PC-9 (cell line): ENCODE measurements at regions of chr7 and their contacts with region 1.

Region 1: GRCh38 chr7:32803406-32804141 is 88.0 kb downstream of the KBTBD2 start:
- DNase-seq: no peak
- H3K4me3 ChIP-seq: no peak overlapping the region
- H3K27ac ChIP-seq: no peak overlapping the region
- H3K4me1 ChIP-seq: no peaks in the 10 kb centered on the region
- H3K27me3 ChIP-seq: no peaks in the 10 kb centered on the region
- CTCF ChIP-seq: no peak

Region 2: GRCh38 chr7:32490127-32490822 is 313.3 kb before region 1 on chr7 and contains the start of gene LSM5:
- CTCF ChIA-PET with region 1: no interaction called
- POLR2A ChIA-PET with region 1: no interaction called
- intact Hi-C with region 1: loop called (anchors 5 kb)
- DNase-seq: peak; percentile 89 to 91
- H3K4me3 ChIP-seq: peak within 1 kb of the TSS; percentile 67
- H3K27ac ChIP-seq: peak within 1 kb of the TSS; percentile 66
- H3K4me1 ChIP-seq: peaks cover 23% of the 10 kb centered on the region
- H3K27me3 ChIP-seq: no peaks in the 10 kb centered on the region
- CTCF ChIP-seq: no peak
- total RNA-seq, gene LSM5: 97.5 and 104 TPM in 2 replicates

Region 3: GRCh38 chr7:32515890-32516550 is 287.6 kb before region 1 on chr7:
- CTCF ChIA-PET with region 1: no interaction called
- POLR2A ChIA-PET with region 1: no interaction called
- intact Hi-C with region 1: no loop called
- DNase-seq: no peak
- H3K4me3 ChIP-seq: no peak overlapping the region
- H3K27ac ChIP-seq: no peak overlapping the region
- H3K4me1 ChIP-seq: no peaks in the 10 kb centered on the region
- H3K27me3 ChIP-seq: no peaks in the 10 kb centered on the region
- CTCF ChIP-seq: no peak

Region 4: DNA sequence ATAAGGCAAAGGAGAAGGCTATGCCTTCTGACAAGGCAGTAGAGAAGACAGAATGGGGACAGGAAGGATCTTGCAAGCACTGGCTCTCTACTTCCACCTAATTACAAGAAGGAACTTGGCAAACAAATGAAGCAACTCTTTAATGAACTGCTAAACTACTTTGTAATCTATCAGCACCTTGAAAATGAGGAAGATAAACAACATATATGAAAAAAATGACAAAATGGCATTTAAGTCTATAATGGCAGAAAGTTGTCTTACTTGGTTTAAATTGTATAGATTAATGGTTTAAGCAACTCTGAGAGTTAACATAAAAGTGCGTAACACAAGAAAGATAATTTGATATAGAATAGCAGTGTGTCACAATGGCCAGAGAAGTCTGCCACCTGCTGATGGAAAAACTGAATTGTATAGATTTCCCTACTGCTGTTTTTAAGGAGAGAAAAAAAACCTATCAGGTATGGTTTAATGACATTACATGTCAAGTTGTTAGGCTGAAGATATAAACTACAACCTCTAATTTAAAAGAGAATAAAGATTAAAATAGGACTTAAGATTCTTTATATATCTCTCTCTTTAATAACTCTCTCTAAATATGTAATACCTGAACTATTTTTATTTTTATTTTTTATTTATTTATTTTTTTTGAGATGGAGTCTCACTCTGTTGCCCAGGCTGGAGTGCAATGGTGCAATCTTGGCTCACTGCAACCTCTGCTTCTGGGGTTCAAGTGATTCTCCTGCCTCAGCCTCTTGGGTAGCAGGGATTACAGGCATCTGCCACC is 247.2 kb after region 1 on chr7:
- CTCF ChIA-PET with region 1: interaction called, 5 read pairs
- POLR2A ChIA-PET with region 1: no interaction called
- intact Hi-C with region 1: loop called (anchors 1 kb)
- DNase-seq: peak in 1 of 2 experiments; percentile 63
- H3K4me3 ChIP-seq: no peak overlapping the region
- H3K27ac ChIP-seq: no peak overlapping the region
- H3K4me1 ChIP-seq: peaks cover 5% of the 10 kb centered on the region; the same call in 1 of the 2 replicates
- H3K27me3 ChIP-seq: no peaks in the 10 kb centered on the region
- CTCF ChIP-seq: peak; percentile 87